PC-3 (cell line): ENCODE measurements at regions of chr12 and their contacts with region 1.

Region 1: GRCh38 chr12:94445662-94446061 is 14.0 kb downstream of the CEP83 start:
- DNase-seq: peak; percentile 34
- ATAC-seq: no peak
- H3K4me3 ChIP-seq: no peak overlapping the region
- H3K27ac ChIP-seq: no peak overlapping the region
- H3K4me1 ChIP-seq: no peaks in the 10 kb centered on the region
- H3K27me3 ChIP-seq: no peaks in the 10 kb centered on the region
- CTCF ChIP-seq: no peak

Region 2: DNA sequence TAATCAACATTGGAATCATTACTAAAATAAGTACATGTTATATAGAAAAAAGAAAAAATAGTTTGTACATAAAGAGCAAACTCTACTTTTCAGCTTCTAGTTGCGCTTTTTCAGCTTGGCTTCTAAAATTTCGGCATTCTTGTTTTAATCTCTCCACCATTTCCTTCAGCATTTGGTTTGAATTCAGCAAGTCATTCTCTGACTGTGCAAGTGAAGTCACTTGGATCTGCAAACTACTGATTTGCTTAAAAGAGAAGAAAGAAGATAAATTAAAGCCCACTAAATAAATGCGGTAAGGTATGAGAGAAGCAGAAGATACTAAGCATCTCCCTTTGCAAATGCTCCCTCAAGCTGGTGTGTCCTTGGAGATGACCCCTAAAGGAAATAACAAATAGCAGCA is 112.3 kb before region 1 on chr12:
- CTCF ChIA-PET with region 1: no interaction called
- POLR2A ChIA-PET with region 1: interaction called, 13 read pairs
- intact Hi-C with region 1: no loop called
- DNase-seq: no peak
- ATAC-seq: no peak
- H3K4me3 ChIP-seq: no peak overlapping the region
- H3K27ac ChIP-seq: no peak overlapping the region
- H3K4me1 ChIP-seq: no peaks in the 10 kb centered on the region
- H3K27me3 ChIP-seq: no peaks in the 10 kb centered on the region
- CTCF ChIP-seq: no peak

Region 3: GRCh38 chr12:94405413-94406116 is 40.1 kb before region 1 on chr12:
- CTCF ChIA-PET with region 1: no interaction called
- POLR2A ChIA-PET with region 1: no interaction called
- intact Hi-C with region 1: no loop called
- DNase-seq: no peak
- ATAC-seq: no peak
- H3K4me3 ChIP-seq: no peak overlapping the region
- H3K27ac ChIP-seq: no peak overlapping the region
- H3K4me1 ChIP-seq: no peaks in the 10 kb centered on the region
- H3K27me3 ChIP-seq: no peaks in the 10 kb centered on the region
- CTCF ChIP-seq: no peak